ENCODE measurements at regions of chr14 and their contacts with region 1.

Region 1: GRCh38 chr14:106459971-106460730 is 933.8 kb downstream of the TMEM121 start:
- DNase-seq: peak; percentile 75
- H3K4me3 Mint-ChIP-seq: no peak overlapping the region
- H3K27ac Mint-ChIP-seq: no peak overlapping the region
- H3K4me1 Mint-ChIP-seq: no peaks in the 10 kb centered on the region
- H3K27me3 Mint-ChIP-seq: no peaks in the 10 kb centered on the region

Region 2: GRCh38 chr14:106013879-106014376 is 446.2 kb before region 1 on chr14:
- CTCF ChIA-PET with region 1: no interaction called
- intact Hi-C with region 1: no loop called
- DNase-seq: peak; percentile 66
- H3K4me3 Mint-ChIP-seq: peak overlapping the region; percentile 75
- H3K27ac Mint-ChIP-seq: peak overlapping the region; percentile 100
- H3K4me1 Mint-ChIP-seq: peaks cover 81% of the 10 kb centered on the region
- H3K27me3 Mint-ChIP-seq: no peaks in the 10 kb centered on the region

Region 3: GRCh38 chr14:106436310-106436905 is 23.7 kb before region 1 on chr14:
- CTCF ChIA-PET with region 1: interaction called, 10 read pairs
- intact Hi-C with region 1: no loop called
- DNase-seq: peak; percentile 75
- H3K4me3 Mint-ChIP-seq: no peak overlapping the region
- H3K27ac Mint-ChIP-seq: no peak overlapping the region
- H3K4me1 Mint-ChIP-seq: peaks cover 7% of the 10 kb centered on the region
- H3K27me3 Mint-ChIP-seq: peaks cover 10% of the 10 kb centered on the region